Activated T-helper 2 cell treated with anti-CD3 and anti-CD28 coated beads, Interferon-gamma antibody, Interleukin-2, Interleukin-4, amounts not matched to agents 10 μg/mL and 5 μg/mL and 100 μg/mL, durations not matched to agents 14 hours and 24 hours and 36 hours (primary cell): ENCODE measurements at regions of chr11 and their contacts with region 1.

Region 1: GRCh38 chr11:94504689-94505293 is 7.5 kb upstream of the C11orf97 start:
- DNase-seq: no peak
- H3K4me3 Mint-ChIP-seq: no peak overlapping the region
- H3K27ac Mint-ChIP-seq: no peak overlapping the region
- H3K4me1 Mint-ChIP-seq: no peaks in the 10 kb centered on the region
- H3K27me3 Mint-ChIP-seq: peaks cover 13% of the 10 kb centered on the region

Region 2: DNA sequence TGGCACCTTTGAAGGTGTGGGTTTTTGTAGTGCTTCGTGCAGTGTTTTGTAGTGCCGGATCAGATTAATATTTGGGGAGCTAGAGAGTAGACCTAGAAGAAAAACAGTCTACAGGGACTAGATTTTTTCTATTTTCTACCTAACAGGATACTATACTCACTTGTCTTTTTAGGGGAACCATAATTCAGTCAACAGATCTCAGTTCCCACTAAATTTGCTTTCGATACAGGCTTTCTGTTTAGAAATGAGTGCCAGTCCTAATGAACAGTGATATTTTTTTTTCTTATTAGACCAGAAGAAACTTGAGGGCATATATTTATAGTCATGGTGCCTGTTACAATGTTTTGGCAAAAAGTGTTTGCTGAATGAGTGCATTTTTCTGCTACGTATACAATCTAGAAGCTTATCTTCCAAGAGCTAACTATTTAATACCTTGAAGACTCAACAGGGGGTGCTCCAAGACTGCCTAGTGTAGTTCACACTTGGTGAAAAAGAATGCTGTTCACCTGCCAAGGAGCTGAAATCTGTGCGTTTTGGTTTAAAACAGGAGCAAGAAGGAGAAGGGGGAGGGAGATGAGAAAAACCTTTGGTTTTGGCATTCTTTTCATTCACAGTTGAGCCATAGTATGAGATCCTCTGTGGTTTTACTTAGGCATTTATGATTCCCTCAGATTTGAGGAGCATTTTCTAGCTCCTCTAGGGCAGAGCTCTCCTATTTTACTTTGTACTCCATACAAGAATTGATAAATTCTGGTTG is 609.5 kb before region 1 on chr11:
- intact Hi-C with region 1: loop called (anchors 1 kb)
- DNase-seq: no peak
- H3K4me3 Mint-ChIP-seq: no peak overlapping the region
- H3K27ac Mint-ChIP-seq: no peak overlapping the region
- H3K4me1 Mint-ChIP-seq: no peaks in the 10 kb centered on the region
- H3K27me3 Mint-ChIP-seq: peaks cover 19% of the 10 kb centered on the region

Region 3: GRCh38 chr11:93921695-93922468 is 582.9 kb before region 1 on chr11:
- intact Hi-C with region 1: loop called (anchors 1 kb)
- DNase-seq: peak; percentile 9
- H3K4me3 Mint-ChIP-seq: no peak overlapping the region
- H3K27ac Mint-ChIP-seq: no peak overlapping the region
- H3K4me1 Mint-ChIP-seq: no peaks in the 10 kb centered on the region
- H3K27me3 Mint-ChIP-seq: no peaks in the 10 kb centered on the region

Region 4: GRCh38 chr11:94171693-94172440 is 332.9 kb before region 1 on chr11:
- intact Hi-C with region 1: loop called (anchors 2 kb)
- DNase-seq: no peak
- H3K4me3 Mint-ChIP-seq: no peak overlapping the region
- H3K27ac Mint-ChIP-seq: no peak overlapping the region
- H3K4me1 Mint-ChIP-seq: peaks cover 10% of the 10 kb centered on the region
- H3K27me3 Mint-ChIP-seq: no peaks in the 10 kb centered on the region

Region 5: DNA sequence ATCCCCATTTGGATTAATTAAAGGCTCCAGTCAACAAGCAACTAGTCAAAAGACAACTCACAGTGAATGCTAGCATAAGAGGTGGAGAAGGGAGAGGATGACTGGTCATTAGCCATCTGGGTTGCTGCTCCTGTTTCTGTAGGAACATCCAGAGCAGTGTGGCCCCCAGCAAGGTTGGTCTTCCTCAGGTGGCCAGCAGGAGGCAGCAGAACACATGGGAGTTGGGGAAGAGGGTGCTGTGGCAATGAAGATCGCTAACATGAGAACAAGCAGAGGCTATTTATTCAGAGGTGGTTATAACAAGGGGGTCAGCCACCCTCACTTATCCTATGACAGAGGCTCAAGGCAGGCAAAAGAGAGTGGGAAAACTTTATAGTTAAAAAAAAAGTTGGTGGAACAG is 179.1 kb before region 1 on chr11:
- intact Hi-C with region 1: loop called (anchors 1 kb)
- DNase-seq: peak; percentile 40
- H3K4me3 Mint-ChIP-seq: no peak overlapping the region
- H3K27ac Mint-ChIP-seq: no peak overlapping the region
- H3K4me1 Mint-ChIP-seq: no peaks in the 10 kb centered on the region
- H3K27me3 Mint-ChIP-seq: peaks cover 9% of the 10 kb centered on the region

Region 6: DNA sequence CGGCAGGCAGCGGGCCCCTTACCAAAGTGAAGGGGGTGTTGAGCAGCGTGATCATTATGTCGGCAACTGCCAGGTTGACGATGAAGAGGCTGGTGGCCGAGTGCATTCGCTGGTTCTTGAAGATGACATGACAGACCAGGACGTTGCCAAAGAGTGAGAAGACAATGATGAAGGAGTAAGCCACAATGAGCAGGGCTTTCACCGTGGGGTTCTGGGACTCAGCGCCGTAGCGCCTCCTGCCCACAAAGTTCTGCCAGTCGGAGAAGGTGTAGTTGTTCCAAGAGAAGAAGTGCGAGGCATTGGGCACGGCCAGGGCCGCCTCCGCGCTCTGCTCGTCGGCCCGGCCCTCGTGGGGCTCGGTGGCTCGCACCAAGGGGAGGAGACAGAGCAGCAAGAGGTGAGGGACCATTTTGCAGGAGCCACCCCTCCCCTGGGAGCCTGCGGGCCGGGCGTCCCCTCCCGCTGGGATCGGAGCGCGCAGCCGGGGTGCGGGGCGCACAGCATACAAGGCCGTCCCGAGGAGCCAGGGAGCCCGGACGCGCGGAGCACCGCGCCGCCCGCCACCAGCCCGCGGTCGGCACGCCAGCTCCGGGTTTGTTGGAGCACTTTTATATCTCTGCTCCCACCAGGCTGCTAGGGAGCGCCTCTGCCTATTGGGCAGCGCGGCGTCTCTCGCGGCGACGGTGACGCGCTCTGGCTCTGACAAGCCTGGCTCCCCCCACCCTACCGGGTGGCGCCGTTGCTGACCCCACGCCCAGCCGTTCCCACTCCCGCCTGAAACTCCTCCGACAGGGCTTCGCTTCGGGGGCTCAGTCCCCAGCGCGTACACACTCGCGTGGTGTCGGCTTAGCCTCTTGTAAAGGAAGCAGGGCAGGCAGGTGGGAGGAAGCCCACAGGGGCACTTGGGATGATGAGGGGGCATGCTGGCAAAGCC is 103.7 kb before region 1 on chr11 and contains the start of gene GPR83:
- intact Hi-C with region 1: no loop called
- DNase-seq: no peak
- H3K4me3 Mint-ChIP-seq: peak within 1 kb of the TSS; percentile 22
- H3K27ac Mint-ChIP-seq: no peak within 1 kb of the TSS
- H3K4me1 Mint-ChIP-seq: peaks cover 3% of the 10 kb centered on the region
- H3K27me3 Mint-ChIP-seq: peaks cover 44% of the 10 kb centered on the region
- total RNA-seq, gene GPR83: 0.05 TPM in 1 of 2 replicates, not detected in the other